ENCODE measurements at regions of chr10 and their contacts with region 1.

Region 1: GRCh38 chr10:114103284-114103683 is 59.6 kb downstream of the ADRB1 start:
- DNase-seq: no peak
- H3K4me3 Mint-ChIP-seq: no peak overlapping the region
- H3K27ac Mint-ChIP-seq: no peak overlapping the region
- H3K4me1 Mint-ChIP-seq: peaks cover 18% of the 10 kb centered on the region
- H3K27me3 Mint-ChIP-seq: peaks cover 50% of the 10 kb centered on the region

Region 2: DNA sequence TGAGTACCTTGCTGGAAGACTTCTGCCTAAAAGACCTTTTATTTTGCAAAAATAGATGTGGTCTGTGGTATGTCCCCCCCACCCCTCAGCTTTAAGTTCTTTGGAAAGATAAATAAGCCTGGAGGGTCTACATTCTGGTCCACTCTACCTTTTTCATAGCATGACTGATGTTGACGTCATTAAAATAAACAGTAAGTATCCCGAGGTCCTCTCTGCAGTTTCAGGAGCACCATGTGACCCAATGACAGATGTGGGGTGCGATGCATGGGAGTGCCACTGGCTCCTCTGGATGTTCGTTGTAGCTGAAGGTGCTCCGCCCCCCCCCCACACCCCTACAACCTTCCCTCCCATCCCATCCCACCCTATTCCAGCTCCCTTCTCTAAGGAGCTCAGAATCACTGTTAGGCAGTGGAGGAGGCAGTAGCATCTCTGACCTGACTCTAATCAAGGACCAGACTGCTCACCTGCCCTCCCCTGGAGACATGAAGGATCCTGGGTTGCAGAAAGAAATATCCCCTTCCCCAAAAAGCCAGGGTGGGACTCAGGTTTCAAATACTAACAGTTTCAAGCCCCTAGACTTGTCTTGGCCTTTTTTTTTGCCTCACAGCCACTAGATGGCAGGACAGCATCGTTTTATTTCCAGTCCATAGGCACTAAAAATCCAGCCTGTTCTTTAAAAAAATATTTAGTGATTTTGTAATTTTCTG is 398.5 kb before region 1 on chr10:
- intact Hi-C with region 1: loop called (anchors 5 kb)
- DNase-seq: peak; percentile 74
- H3K4me3 Mint-ChIP-seq: no peak overlapping the region
- H3K27ac Mint-ChIP-seq: no peak overlapping the region
- H3K4me1 Mint-ChIP-seq: peaks cover 26% of the 10 kb centered on the region
- H3K27me3 Mint-ChIP-seq: no peaks in the 10 kb centered on the region

Region 3: DNA sequence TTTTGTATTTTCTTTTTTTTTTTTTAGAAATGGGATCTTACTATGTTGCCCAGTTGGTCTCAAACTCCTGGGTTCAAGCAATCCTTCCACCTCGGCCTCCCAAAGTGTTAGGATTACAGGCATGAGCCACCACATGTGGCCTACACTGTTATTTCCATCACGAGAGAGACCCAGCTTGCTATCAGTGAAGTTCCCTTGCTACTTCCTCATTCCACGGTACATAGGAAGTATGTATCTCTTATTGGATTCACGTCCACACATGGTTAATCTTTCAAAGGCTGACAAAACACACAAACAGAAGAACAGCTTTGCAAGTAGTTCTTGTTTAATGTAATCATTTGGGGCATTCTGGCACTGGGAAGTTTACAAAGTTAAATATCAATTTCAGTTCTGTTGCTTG is 300.3 kb before region 1 on chr10:
- intact Hi-C with region 1: loop called (anchors 1 kb)
- DNase-seq: no peak
- H3K4me3 Mint-ChIP-seq: no peak overlapping the region
- H3K27ac Mint-ChIP-seq: no peak overlapping the region
- H3K4me1 Mint-ChIP-seq: peaks cover 2% of the 10 kb centered on the region
- H3K27me3 Mint-ChIP-seq: peaks cover 44% of the 10 kb centered on the region

Region 4: GRCh38 chr10:113880236-113880635 is 223.0 kb before region 1 on chr10:
- intact Hi-C with region 1: no loop called
- DNase-seq: no peak
- H3K4me3 Mint-ChIP-seq: no peak overlapping the region
- H3K27ac Mint-ChIP-seq: no peak overlapping the region
- H3K4me1 Mint-ChIP-seq: peaks cover 14% of the 10 kb centered on the region
- H3K27me3 Mint-ChIP-seq: no peaks in the 10 kb centered on the region

Measured in activated CD4-positive, alpha-beta T cell treated with anti-CD3 and anti-CD28 coated beads, Interleukin-2, amount 10 ng/mL, durations not matched to agents 24 days and 14 days (primary cell).